ENCODE measurements at regions of chr20 and their contacts with region 1.

Region 1: GRCh38 chr20:53915446-53916172 is 154.8 kb downstream of the BCAS1 start:
- DNase-seq: peak; percentile 89 to 92
- ATAC-seq: peak; percentile 94 to 97
- H3K4me3 ChIP-seq: peak overlapping the region; percentile 54
- H3K27ac ChIP-seq: peak overlapping the region; percentile 89 to 92
- H3K4me1 ChIP-seq: peaks cover 31% of the 10 kb centered on the region
- CTCF ChIP-seq: peak; percentile 96
- EP300 ChIP-seq: no peak
- POLR2A ChIP-seq: no peak
- RAD21 ChIP-seq: peak; percentile 94 to 97

Region 2: GRCh38 chr20:53611449-53611894 is 304.1 kb before region 1 on chr20:
- CTCF ChIA-PET with region 1: interaction called, 29 read pairs
- POLR2A ChIA-PET with region 1: no interaction called
- DNase-seq: peak; percentile 65 to 90
- ATAC-seq: peak; percentile 66 to 74
- H3K4me3 ChIP-seq: 0 out of 3 replicates have a peak overlapping the region, but pooled peaks have one; percentile 0
- H3K27ac ChIP-seq: peak overlapping the region; percentile 74 to 91
- H3K4me1 ChIP-seq: peaks cover 57% of the 10 kb centered on the region
- CTCF ChIP-seq: no peak
- EP300 ChIP-seq: peak in 1 of 2 experiments; percentile 37; a peak in 1 of 5 replicates
- POLR2A ChIP-seq: no peak
- RAD21 ChIP-seq: 0 out of 5 replicates have a peak, but pooled peaks of 1 of the 2 experiments have one; percentile 26

Region 3: DNA sequence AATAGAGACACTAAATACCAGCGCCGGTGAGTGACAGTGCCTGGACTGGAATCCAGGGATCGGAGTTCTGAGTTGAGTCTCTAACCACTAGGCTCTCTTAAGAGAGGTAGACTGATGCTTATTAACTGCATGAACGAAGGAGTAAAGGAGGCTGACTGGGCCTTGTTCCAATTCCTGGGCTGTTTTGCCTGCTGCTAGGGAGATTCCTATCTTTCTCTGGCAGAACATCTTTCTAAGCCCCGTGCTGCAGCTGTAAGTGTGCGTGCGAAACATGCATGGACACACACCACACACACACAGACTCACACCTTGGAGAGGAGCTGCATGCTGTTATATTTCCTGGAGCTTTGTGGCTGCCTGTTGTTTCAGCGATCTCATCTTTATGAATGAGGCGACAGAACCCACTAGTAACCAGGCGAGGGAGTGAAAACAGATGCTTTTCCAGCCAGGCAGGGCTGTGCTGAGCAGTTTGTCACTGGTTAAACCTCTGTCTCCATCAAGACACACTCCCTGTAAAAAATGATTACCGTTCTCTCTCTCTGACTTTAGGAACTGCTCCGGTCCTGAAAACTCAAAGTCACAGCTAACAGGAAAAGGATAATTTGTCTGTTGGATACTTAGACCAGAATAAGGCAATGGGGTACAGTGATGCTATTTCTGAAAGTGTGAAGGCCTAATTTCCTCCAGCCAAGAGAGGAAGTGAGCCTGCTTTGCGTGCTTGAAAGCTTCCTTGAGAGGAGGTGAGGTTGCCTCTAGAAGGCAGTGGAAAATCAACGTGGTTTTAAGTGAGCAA is 164.6 kb before region 1 on chr20:
- CTCF ChIA-PET with region 1: interaction called, 6 read pairs
- POLR2A ChIA-PET with region 1: interaction called, 25 read pairs
- DNase-seq: no peak
- ATAC-seq: peak in 1 of 2 experiments; percentile 12; a peak in 1 of 6 replicates
- H3K4me3 ChIP-seq: no peak overlapping the region
- H3K27ac ChIP-seq: peak overlapping the region; percentile 86
- H3K4me1 ChIP-seq: peaks cover 53% of the 10 kb centered on the region
- CTCF ChIP-seq: no peak
- EP300 ChIP-seq: no peak
- POLR2A ChIP-seq: no peak
- RAD21 ChIP-seq: no peak

Region 4: DNA sequence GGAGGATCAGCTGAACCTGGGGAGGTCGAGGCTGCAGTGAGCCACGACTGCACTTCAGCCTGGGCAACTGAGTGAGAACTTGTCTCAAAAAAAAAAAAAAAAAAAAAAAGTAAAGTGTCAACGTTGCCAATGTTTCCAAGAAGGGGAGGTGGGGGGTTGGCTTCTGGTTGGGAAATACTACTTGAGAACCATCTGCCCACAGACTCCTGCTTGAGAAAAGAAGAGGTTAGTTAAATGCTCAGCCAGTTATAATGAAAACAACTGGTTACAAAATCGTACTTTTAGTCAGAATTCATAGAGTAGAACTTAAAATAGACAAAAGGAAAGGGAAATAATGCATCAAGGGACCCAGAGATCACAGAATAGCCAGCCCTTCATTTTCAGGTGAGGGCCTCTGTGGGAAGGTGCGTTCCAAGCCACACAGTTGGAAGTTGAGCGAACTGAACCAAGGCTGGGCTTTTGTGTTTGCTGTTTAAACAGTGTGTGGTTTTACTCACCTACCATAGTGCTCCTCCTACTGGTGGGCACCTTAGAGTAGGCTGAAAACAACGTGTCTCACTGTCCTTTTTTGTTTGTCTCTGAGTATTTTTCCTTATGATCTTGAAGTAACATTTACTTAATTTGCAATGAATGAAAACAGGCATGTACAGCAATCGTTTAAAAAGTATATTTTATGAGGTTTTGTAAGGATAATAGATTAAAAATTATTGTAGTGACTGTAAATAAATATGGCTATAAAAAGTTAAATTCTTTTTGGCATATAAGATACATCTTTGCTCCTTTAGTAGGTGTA is 45.9 kb before region 1 on chr20:
- CTCF ChIA-PET with region 1: interaction called, 22 read pairs
- POLR2A ChIA-PET with region 1: no interaction called
- DNase-seq: peak; percentile 83 to 93
- ATAC-seq: peak; percentile 88 to 89
- H3K4me3 ChIP-seq: no peak overlapping the region
- H3K27ac ChIP-seq: peak overlapping the region; percentile 82 to 93
- H3K4me1 ChIP-seq: peaks cover 72% of the 10 kb centered on the region
- CTCF ChIP-seq: peak; percentile 87
- EP300 ChIP-seq: no peak; a peak in 1 of 5 replicates
- POLR2A ChIP-seq: no peak
- RAD21 ChIP-seq: peak; percentile 91

Region 5: GRCh38 chr20:53899351-53900167 is 16.1 kb before region 1 on chr20:
- CTCF ChIA-PET with region 1: interaction called, 38 read pairs
- POLR2A ChIA-PET with region 1: interaction called, 4 read pairs
- DNase-seq: peak; percentile 60 to 80
- ATAC-seq: peak; percentile 87 to 89
- H3K4me3 ChIP-seq: no peak overlapping the region
- H3K27ac ChIP-seq: peak overlapping the region; percentile 70 to 91
- H3K4me1 ChIP-seq: peaks cover 42% of the 10 kb centered on the region
- CTCF ChIP-seq: no peak
- EP300 ChIP-seq: no peak
- POLR2A ChIP-seq: no peak
- RAD21 ChIP-seq: no peak

Region 6: DNA sequence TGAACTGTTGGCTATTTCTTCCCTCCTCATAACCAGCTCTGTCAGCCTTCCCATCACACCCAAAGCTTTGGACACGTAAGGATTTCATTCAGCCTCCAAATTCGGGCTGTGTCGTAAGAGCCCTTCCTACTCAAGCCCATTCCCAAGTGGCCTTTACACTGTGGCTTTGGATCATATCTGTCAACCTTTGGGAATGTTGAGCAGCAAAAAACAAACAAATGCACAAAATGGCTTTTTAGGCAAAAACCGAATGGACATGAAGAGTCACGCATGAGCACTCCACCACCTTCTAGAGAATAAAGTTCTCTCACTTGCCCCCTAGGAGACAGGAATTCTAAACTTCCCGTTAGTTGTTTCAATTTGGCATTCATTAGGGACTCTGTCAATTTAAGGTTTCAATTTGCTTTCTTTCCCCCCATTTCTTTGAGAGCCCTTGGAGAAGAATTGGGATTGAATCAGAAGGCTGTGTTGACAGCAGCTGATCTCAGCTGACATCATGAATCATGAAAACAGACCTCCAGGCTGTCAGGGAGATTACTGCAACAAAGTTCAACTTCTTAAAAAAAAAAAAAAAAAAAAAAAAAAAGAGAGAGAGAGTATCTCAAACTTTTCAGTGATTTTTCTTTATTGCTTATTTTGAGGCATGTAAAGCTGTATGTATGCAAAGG is 44.4 kb after region 1 on chr20:
- CTCF ChIA-PET with region 1: no interaction called
- POLR2A ChIA-PET with region 1: no interaction called
- DNase-seq: peak in 1 of 2 experiments; percentile 17
- ATAC-seq: 0 out of 6 replicates have a peak, but pooled peaks of 1 of the 2 experiments have one; percentile 33
- H3K4me3 ChIP-seq: no peak overlapping the region
- H3K27ac ChIP-seq: no peak overlapping the region
- H3K4me1 ChIP-seq: peaks cover 7% of the 10 kb centered on the region; the same call in 2 of the 3 replicates
- CTCF ChIP-seq: no peak
- EP300 ChIP-seq: no peak
- POLR2A ChIP-seq: no peak
- RAD21 ChIP-seq: no peak

Region 7: DNA sequence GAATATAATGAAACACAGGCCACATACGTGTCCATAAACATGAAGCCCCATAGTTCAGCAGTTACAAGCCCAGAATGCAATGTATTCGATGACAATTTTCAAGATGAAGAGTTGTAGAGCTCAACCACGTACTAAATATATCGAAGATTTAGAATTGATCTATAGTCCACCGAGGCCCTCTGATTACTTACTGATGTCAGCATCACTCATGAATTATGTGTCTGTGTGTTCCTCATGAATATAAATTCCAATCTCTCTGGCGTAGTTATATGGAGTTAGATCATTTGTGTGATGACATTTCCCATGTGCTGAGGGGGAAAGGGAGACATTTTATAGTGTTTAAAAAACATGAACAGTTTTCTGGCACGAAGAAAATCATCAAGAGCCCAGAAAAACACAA is 389.8 kb after region 1 on chr20:
- CTCF ChIA-PET with region 1: no interaction called
- POLR2A ChIA-PET with region 1: no interaction called
- DNase-seq: no peak
- ATAC-seq: no peak
- H3K4me3 ChIP-seq: no peak overlapping the region
- H3K27ac ChIP-seq: no peak overlapping the region
- H3K4me1 ChIP-seq: no peaks in the 10 kb centered on the region
- CTCF ChIP-seq: no peak
- EP300 ChIP-seq: no peak
- POLR2A ChIP-seq: no peak
- RAD21 ChIP-seq: no peak